ENCODE measurements at regions of chr7 and their contacts with region 1.

Region 1: GRCh38 chr7:30594549-30595435 is at the start of gene GARS1:
- DNase-seq: peak; percentile 82 to 94 (median 87)
- ATAC-seq: peak; percentile 89 to 94 (median 91)
- H3K4me3 ChIP-seq: peak within 1 kb of the TSS; percentile 69 to 85
- H3K4me3 Mint-ChIP-seq: peak within 1 kb of the TSS; percentile 98 to 100 (median 99)
- H3K27ac ChIP-seq: peak within 1 kb of the TSS; percentile 96
- H3K27ac Mint-ChIP-seq: peak within 1 kb of the TSS; percentile 99 to 100
- H3K4me1 ChIP-seq: peaks cover 17 to 25% of the 10 kb centered on the region in 2 experiments
- H3K4me1 Mint-ChIP-seq: peaks cover 74 to 76% (median 75%) of the 10 kb centered on the region in 3 donors
- H3K27me3 ChIP-seq: no peaks in the 10 kb centered on the region
- H3K27me3 Mint-ChIP-seq: no peaks in the 10 kb centered on the region
- total RNA-seq, gene GARS1: 78.8 to 121 (median 114) TPM

Region 2: GRCh38 chr7:30478349-30479201 is 116.2 kb before region 1 on chr7 and contains the start of gene NOD1:
- CTCF ChIA-PET with region 1: no interaction called
- POLR2A ChIA-PET with region 1: no interaction called
- DNase-seq: peak; percentile 21 to 70 (median 55)
- ATAC-seq: peak; percentile 88 to 92 (median 91)
- H3K4me3 ChIP-seq: peak within 1 kb of the TSS; percentile 85 to 90
- H3K4me3 Mint-ChIP-seq: peak within 1 kb of the TSS in 2 of 3 donors; percentile 92 to 94
- H3K27ac ChIP-seq: peak within 1 kb of the TSS; percentile 73
- H3K27ac Mint-ChIP-seq: peak within 1 kb of the TSS; percentile 84 to 88
- H3K4me1 ChIP-seq: peaks cover 5 to 26% of the 10 kb centered on the region in 2 experiments
- H3K4me1 Mint-ChIP-seq: peaks cover 43 to 59% (median 58%) of the 10 kb centered on the region in 3 donors
- H3K27me3 ChIP-seq: no peaks in the 10 kb centered on the region
- H3K27me3 Mint-ChIP-seq: no peaks in the 10 kb centered on the region
- total RNA-seq, gene NOD1: 15.6 to 24.6 (median 19.4) TPM

Region 3: GRCh38 chr7:30630986-30631385 is 36.2 kb after region 1 on chr7:
- CTCF ChIA-PET with region 1: interaction called, 3 to 12 read pairs
- POLR2A ChIA-PET with region 1: interaction called in 1 of 2 experiments, 5 read pairs
- DNase-seq: no peak
- ATAC-seq: no peak
- H3K4me3 ChIP-seq: no peak overlapping the region
- H3K4me3 Mint-ChIP-seq: no peak overlapping the region
- H3K27ac ChIP-seq: no peak overlapping the region
- H3K27ac Mint-ChIP-seq: no peak overlapping the region
- H3K4me1 ChIP-seq: no peaks in the 10 kb centered on the region
- H3K4me1 Mint-ChIP-seq: peaks cover 0 to 5% (median 4%) of the 10 kb centered on the region in 3 donors
- H3K27me3 ChIP-seq: no peaks in the 10 kb centered on the region
- H3K27me3 Mint-ChIP-seq: no peaks in the 10 kb centered on the region

Measured in T-cell (primary cell).